ENCODE measurements at regions of chr4 and their contacts with region 1.

Region 1: GRCh38 chr4:4694296-4694772 is 152.5 kb upstream of the STX18 start:
- DNase-seq: no peak
- H3K4me3 ChIP-seq: no peak overlapping the region
- H3K27ac ChIP-seq: no peak overlapping the region
- H3K4me1 ChIP-seq: no peaks in the 10 kb centered on the region
- H3K27me3 ChIP-seq: no peaks in the 10 kb centered on the region
- CTCF ChIP-seq: peak; percentile 16 to 24

Region 2: DNA sequence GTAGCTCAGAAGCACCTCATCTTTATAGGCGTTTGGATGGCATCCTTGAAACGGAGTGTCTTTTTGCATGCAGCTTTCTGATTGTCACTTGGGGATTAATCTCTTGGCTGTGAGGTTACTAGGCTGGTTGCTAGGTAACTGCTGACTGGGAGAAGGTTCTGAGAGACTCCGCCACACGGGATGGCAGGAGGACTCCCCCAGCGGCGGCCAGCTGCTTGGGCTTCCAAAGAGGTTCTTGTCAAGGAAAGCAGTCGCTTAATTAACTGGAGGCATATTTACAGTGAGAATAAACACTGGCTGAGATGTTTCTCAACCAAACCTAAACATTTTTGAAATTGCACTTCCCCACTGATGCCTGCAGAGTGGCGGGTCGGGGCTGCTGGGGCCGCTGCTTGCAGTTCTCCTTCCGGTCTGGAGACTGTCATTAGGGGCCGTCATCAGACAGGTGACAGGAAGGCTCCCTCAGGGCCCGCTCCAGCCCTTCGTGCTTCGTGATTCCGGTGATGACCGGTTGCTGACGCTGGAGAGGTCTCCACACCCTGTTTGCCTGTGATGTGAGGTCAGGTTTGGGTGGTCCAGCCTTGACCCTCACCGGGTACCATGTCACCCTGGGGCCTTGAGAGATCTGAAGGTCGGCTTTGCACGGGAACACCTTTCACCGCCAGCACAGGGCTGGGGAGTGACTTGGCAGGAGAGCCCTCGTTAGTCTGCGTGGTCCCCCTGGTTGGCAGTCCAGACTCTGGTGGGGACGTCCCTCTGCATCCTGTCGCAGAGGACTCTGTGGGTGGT is 298.3 kb before region 1 on chr4:
- CTCF ChIA-PET with region 1: no interaction called
- dilution Hi-C with region 1: no loop called
- in situ Hi-C with region 1: no loop called
- intact Hi-C with region 1: no loop called
- DNase-seq: no peak
- H3K4me3 ChIP-seq: no peak overlapping the region
- H3K27ac ChIP-seq: no peak overlapping the region
- H3K4me1 ChIP-seq: peaks cover 12% of the 10 kb centered on the region
- H3K27me3 ChIP-seq: no peaks in the 10 kb centered on the region
- CTCF ChIP-seq: no peak

Region 3: DNA sequence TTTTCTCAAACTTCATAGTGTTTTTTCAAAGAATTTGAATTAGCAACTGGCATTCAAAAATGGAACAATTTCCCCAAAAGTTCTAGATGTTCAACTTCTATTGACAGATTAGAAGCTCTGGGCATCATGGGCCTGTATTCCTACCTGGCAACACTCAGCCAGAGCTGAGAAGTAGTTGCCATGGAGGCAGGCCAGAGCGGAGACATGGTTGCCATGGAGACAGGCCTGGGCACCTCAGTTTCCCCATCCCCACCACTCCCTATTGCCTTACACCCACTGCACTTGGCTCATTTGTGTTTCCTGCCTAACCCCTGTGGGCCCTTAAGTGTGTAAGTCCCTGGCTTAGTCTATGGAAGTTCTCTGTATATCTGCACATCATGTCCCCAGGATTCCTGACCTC is 48.8 kb after region 1 on chr4:
- CTCF ChIA-PET with region 1: no interaction called
- dilution Hi-C with region 1: loop called (anchors 5 kb)
- in situ Hi-C with region 1: no loop called
- intact Hi-C with region 1: no loop called
- DNase-seq: no peak
- H3K4me3 ChIP-seq: no peak overlapping the region
- H3K27ac ChIP-seq: no peak overlapping the region
- H3K4me1 ChIP-seq: no peaks in the 10 kb centered on the region
- H3K27me3 ChIP-seq: no peaks in the 10 kb centered on the region
- CTCF ChIP-seq: no peak

Measured in mammary epithelial cell (primary cell).